ENCODE measurements at regions of chr9 and their contacts with region 1.

Region 1: DNA sequence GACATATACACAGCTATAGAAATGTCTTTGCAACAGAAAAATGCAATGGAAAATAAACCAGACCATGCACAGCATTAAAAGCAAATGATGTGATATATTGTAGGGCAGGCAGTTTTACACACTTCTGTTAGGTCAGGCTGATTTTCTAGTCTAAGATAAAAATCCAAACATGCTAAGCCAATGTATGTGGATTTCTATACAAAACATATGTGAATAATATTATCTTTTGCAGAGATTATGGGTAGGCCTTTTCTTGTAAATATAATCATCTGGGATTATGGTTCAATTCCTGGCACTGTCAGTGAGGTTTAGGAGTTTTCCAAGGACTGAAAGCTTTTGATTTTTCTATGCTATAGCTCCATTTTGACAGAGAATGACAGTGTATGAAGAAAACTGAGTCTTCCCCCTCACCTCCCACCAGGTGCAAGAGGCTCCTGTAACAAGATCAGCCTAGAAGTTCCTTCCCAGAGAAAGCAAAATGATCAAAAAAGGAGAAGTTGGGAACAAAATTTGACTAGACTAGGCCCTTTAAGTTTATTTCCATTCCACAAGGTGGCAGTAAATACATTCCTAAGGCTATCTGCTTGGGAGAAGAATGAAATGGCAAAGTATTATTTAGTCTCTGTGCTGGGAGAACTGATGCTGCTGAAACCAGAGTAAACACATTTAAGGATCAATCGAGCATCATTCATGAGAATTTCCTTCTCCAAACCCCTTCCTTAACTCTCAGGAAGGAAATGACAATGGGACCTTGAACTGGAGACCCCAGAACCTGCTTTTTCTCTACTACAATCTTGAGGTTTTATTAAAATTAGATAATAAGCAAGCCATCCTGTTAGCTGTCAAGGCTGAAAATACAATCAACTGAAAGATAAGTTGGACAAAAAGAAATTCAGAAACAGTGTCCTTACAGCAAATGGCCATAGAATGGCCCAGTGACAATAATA is 133.0 kb upstream of the TUT7 start:
- DNase-seq: no peak
- H3K4me3 ChIP-seq: no peak overlapping the region
- H3K27ac ChIP-seq: no peak overlapping the region
- H3K4me1 ChIP-seq: peaks cover 0 to 7% (median 0%) of the 10 kb centered on the region in 4 donors
- H3K27me3 ChIP-seq: no peaks in the 10 kb centered on the region
- CTCF ChIP-seq: peak; percentile 61 to 70 (median 61)
- EP300 ChIP-seq: no peak
- POLR2A ChIP-seq: no peak

Region 2: GRCh38 chr9:86434039-86434726 is 53.0 kb before region 1 on chr9:
- intact Hi-C with region 1: loop called (anchors 10 kb)
- DNase-seq: no peak
- H3K4me3 ChIP-seq: no peak overlapping the region
- H3K27ac ChIP-seq: peak overlapping the region; percentile 20 to 36 (median 26)
- H3K4me1 ChIP-seq: peaks cover 0 to 6% (median 2%) of the 10 kb centered on the region in 4 donors
- H3K27me3 ChIP-seq: no peaks in the 10 kb centered on the region
- CTCF ChIP-seq: peak; percentile 70 to 83 (median 71)
- EP300 ChIP-seq: no peak
- POLR2A ChIP-seq: no peak

Region 3: GRCh38 chr9:86948074-86948929 is 461.1 kb after region 1 on chr9:
- intact Hi-C with region 1: loop called (anchors 2 kb)
- DNase-seq: peak; percentile 94
- H3K4me3 ChIP-seq: peak overlapping the region; percentile 80 to 91 (median 90)
- H3K27ac ChIP-seq: peak overlapping the region; percentile 89 to 96 (median 94)
- H3K4me1 ChIP-seq: peaks cover 19 to 38% (median 35%) of the 10 kb centered on the region in 4 donors
- H3K27me3 ChIP-seq: no peaks in the 10 kb centered on the region
- CTCF ChIP-seq: peak; percentile 74 to 97 (median 85)
- EP300 ChIP-seq: no peak
- POLR2A ChIP-seq: no peak

Region 4: DNA sequence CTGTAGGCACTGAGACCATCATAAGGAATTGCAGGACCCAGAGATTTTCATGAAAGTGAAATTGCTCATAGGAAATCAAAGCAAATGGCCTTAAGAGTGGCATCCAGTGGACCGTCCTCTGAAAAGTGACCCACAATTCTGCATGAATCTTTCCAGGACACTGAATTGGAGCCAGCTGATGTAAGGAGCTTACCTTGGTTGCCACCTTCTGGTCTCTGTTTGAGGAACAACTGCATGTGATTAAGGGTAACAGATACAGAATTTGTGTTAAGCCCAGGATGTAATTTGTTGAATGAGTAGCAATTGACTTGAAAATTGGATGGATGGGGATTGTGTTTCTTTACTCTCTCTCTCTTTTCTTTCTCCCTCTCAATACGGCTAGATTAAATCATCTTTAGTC is 510.0 kb after region 1 on chr9:
- intact Hi-C with region 1: loop called (anchors 2 kb)
- DNase-seq: no peak
- H3K4me3 ChIP-seq: no peak overlapping the region
- H3K27ac ChIP-seq: no peak overlapping the region
- H3K4me1 ChIP-seq: no peaks in the 10 kb centered on the region
- H3K27me3 ChIP-seq: no peaks in the 10 kb centered on the region
- CTCF ChIP-seq: no peak
- EP300 ChIP-seq: no peak
- POLR2A ChIP-seq: no peak